ENCODE measurements at regions of chr16 and their contacts with region 1.

Region 1: GRCh38 chr16:813204-813915 is 12.8 kb upstream of the GNG13 start:
- ATAC-seq: peak; percentile 81 to 92 (median 86)
- H3K4me3 ChIP-seq: peak overlapping the region in 4 of 5 donors; percentile 2 to 25 (median 22)
- H3K27ac ChIP-seq: no peak overlapping the region
- H3K4me1 ChIP-seq: peaks cover 15 to 16% of the 10 kb centered on the region in 2 donors

Region 2: GRCh38 chr16:1069154-1069553 is 255.8 kb after region 1 on chr16:
- in situ Hi-C with region 1: loop called in 7 of 9 experiments (anchors 10 to 25 kb)
- ATAC-seq: peak in 1 of 8 experiments; percentile 39
- H3K4me3 ChIP-seq: no peak overlapping the region
- H3K27ac ChIP-seq: no peak overlapping the region
- H3K4me1 ChIP-seq: peaks cover 30 to 31% of the 10 kb centered on the region in 2 donors

Region 3: GRCh38 chr16:1078579-1079021 is 265.2 kb after region 1 on chr16:
- in situ Hi-C with region 1: loop called in 6 of 9 experiments (anchors 10 to 25 kb)
- ATAC-seq: peak in 6 of 8 experiments; percentile 16 to 67 (median 52)
- H3K4me3 ChIP-seq: no peak overlapping the region
- H3K27ac ChIP-seq: peak overlapping the region in 1 of 2 donors; percentile 23
- H3K4me1 ChIP-seq: peaks cover 35 to 39% of the 10 kb centered on the region in 2 donors

Measured in motor neuron (in vitro differentiated cells).